Keratinocyte (primary cell): ENCODE measurements at regions of chr6 and their contacts with region 1.

Region 1: DNA sequence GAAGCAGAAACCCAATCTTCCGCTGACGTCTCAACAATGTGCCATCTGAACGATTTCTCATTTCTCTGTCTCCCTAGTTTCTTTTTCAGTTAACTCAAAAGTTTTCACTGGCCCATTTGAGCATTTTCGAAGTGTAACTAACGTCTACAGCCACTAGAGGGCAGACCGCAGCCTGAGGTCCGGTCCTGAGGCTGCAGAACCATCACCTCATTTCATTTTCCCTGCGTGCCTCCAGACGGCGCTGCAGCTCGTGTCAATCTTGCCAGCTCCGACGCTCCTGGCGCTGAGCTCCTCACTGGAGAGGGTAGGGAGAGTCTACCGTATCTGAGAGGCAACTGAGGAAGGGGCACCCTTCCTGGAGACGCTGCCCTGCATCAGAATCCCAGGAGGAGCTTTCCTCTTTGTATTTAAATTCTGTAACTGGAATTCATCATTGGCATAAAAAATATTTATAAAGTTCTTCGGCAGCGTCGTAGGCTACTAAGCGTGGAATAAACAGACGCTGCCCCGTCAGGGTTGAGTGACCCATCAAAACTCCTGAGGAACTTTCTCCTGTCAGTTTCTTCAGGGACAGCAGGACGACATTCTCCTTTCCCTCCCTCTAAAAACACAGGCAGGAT is 28.5 kb upstream of the DTNBP1 start:
- DNase-seq: peak; percentile 21
- H3K4me3 ChIP-seq: no peak overlapping the region
- H3K27ac ChIP-seq: no peak overlapping the region
- H3K4me1 ChIP-seq: no peaks in the 10 kb centered on the region
- H3K27me3 ChIP-seq: no peaks in the 10 kb centered on the region
- CTCF ChIP-seq: peak; percentile 100

Region 2: GRCh38 chr6:16183187-16183664 is 491.9 kb after region 1 on chr6:
- dilution Hi-C with region 1: loop called (anchors 25 kb)
- DNase-seq: no peak
- H3K4me3 ChIP-seq: no peak overlapping the region
- H3K27ac ChIP-seq: no peak overlapping the region
- H3K4me1 ChIP-seq: no peaks in the 10 kb centered on the region
- H3K27me3 ChIP-seq: no peaks in the 10 kb centered on the region
- CTCF ChIP-seq: peak in 2 of 3 experiments; percentile 45 to 61